ENCODE measurements at regions of chr14 and their contacts with region 1.

Region 1: DNA sequence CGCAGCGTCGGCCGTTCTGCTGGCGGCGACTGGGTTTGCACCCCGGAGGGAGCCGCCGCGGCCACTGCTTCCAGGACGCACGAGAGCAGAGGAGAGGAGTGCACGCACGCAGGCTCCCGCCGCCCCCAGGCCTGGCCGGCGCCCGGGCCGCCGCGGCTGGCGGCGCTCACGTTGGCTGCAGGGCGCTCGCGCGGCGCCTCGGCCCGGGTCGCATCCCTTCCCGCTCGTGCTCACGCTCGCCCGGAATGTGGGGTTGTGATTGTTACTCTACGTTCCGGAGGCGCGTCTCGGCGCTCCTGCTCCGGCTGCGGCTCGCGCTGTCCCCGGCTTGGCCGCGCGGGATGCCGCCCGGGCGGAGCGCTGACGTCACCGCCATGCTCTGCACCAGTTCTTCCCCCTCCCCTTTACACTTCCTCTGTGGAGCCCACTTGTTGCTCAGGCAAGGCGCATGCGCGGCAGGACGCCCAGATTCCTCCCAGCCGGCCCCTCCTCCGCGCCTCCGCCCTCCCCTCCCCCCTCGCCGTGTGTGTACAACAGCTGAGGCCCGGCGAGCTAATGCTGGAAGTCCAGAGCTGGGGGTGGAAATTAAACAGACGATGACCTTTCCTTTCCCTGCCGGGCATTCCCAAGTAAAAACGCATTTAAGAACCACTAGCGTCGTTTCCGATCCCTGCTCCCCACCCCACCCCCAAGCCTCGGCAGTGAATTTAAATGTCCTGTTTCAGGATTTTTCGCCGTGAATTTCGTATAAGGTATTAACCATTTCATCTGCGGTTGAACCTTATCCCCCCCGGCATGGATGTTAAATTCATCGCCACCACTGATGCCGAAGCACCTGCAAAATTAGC is at the start of gene IRF2BPL:
- DNase-seq: peak; percentile 97
- ATAC-seq: peak; percentile 70
- H3K4me3 ChIP-seq: peak within 1 kb of the TSS; percentile 11 to 95 (median 82)
- H3K4me3 Mint-ChIP-seq: peak within 1 kb of the TSS; percentile 92
- H3K27ac ChIP-seq: peak within 1 kb of the TSS; percentile 96 to 98
- H3K27ac Mint-ChIP-seq: peak within 1 kb of the TSS; percentile 99
- H3K4me1 ChIP-seq: peaks cover 39 to 47% of the 10 kb centered on the region in 2 donors
- H3K4me1 Mint-ChIP-seq: peaks cover 46% of the 10 kb centered on the region
- H3K27me3 ChIP-seq: no peaks in the 10 kb centered on the region
- H3K27me3 Mint-ChIP-seq: no peaks in the 10 kb centered on the region
- CTCF ChIP-seq: no peak
- total RNA-seq, gene IRF2BPL: 32.8 and 34.0 TPM in 2 replicates

Region 2: DNA sequence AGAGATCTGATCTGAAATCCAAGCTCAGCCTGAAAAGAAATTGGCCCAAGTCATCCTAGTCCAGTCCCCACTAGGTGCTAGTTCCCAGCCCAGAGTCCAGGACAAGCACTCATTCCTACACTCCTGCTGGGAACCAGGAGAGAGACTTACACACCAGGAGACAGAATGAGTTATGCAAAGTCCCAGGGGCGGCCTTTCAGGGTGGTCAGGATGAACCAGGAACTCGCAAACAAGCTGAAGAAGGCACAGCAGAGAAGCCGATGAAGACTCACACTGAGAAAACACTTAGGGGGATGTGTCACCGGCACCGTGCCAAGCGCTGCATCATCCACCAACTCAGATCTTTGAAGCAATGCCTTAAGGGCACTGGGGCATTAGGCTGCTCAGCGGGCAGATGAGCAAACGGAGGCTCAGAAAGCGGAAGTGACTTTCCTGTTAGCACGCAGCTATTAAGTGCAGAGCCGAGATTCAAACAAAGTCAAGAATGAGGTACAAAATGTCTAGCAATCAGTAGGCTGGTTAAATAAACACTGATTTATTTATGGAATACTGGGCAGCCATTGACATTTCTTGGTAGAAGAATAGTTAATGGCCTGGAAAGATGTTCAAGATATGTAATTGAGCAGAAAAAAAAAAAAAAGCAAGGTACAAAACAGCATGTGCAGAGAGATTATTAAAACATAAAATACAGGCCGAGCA is 123.7 kb before region 1 on chr14:
- CTCF ChIA-PET with region 1: interaction called, 3 read pairs
- POLR2A ChIA-PET with region 1: interaction called, 9 read pairs
- intact Hi-C with region 1: loop called (anchors 1 kb)
- DNase-seq: peak; percentile 91
- ATAC-seq: peak; percentile 83
- H3K4me3 ChIP-seq: peak overlapping the region in 1 of 5 experiments; percentile 36
- H3K4me3 Mint-ChIP-seq: peak overlapping the region; percentile 55
- H3K27ac ChIP-seq: peak overlapping the region; percentile 57 to 76
- H3K27ac Mint-ChIP-seq: peak overlapping the region; percentile 89
- H3K4me1 ChIP-seq: peaks cover 29 to 45% of the 10 kb centered on the region in 2 donors
- H3K4me1 Mint-ChIP-seq: peaks cover 34% of the 10 kb centered on the region
- H3K27me3 ChIP-seq: peaks cover 0 to 6% (median 0%) of the 10 kb centered on the region in 4 experiments
- H3K27me3 Mint-ChIP-seq: no peaks in the 10 kb centered on the region
- CTCF ChIP-seq: no peak

Region 3: GRCh38 chr14:76947078-76947837 is 81.3 kb before region 1 on chr14:
- CTCF ChIA-PET with region 1: interaction called, 28 read pairs
- POLR2A ChIA-PET with region 1: interaction called, 5 read pairs
- intact Hi-C with region 1: loop called (anchors 1 kb)
- DNase-seq: peak; percentile 90
- ATAC-seq: peak; percentile 95
- H3K4me3 ChIP-seq: peak overlapping the region in 1 of 5 experiments; percentile 24
- H3K4me3 Mint-ChIP-seq: peak overlapping the region; percentile 64
- H3K27ac ChIP-seq: no peak overlapping the region
- H3K27ac Mint-ChIP-seq: peak overlapping the region; percentile 56
- H3K4me1 ChIP-seq: peaks cover 11 to 15% of the 10 kb centered on the region in 2 donors
- H3K4me1 Mint-ChIP-seq: peaks cover 17% of the 10 kb centered on the region
- H3K27me3 ChIP-seq: no peaks in the 10 kb centered on the region
- H3K27me3 Mint-ChIP-seq: no peaks in the 10 kb centered on the region
- CTCF ChIP-seq: peak; percentile 67

Region 4: DNA sequence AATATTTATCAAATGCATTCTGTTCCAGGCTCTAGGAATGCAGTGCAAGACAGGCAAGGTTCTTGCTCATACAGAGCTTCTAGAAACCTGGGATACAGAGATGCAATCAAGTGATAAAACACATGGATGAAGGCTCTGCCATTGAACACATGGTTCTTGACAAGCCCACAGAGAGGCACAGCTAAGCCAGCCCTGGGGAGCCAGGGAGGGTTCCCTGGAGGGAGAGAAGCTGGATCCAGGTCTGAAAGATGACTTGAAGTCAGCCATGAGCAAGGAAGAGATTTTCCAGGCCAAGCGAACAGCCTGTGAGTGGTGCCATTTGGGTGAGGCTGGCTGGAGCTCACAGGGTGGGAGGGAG is 66.3 kb before region 1 on chr14:
- CTCF ChIA-PET with region 1: interaction called, 33 read pairs
- POLR2A ChIA-PET with region 1: interaction called, 54 read pairs
- intact Hi-C with region 1: loop called (anchors 1 kb)
- DNase-seq: no peak
- ATAC-seq: no peak
- H3K4me3 ChIP-seq: peak overlapping the region; percentile 22 to 57 (median 32)
- H3K4me3 Mint-ChIP-seq: peak overlapping the region; percentile 87
- H3K27ac ChIP-seq: peak overlapping the region; percentile 83 to 85
- H3K27ac Mint-ChIP-seq: peak overlapping the region; percentile 95
- H3K4me1 ChIP-seq: peaks cover 44 to 71% of the 10 kb centered on the region in 2 donors
- H3K4me1 Mint-ChIP-seq: peaks cover 72% of the 10 kb centered on the region
- H3K27me3 ChIP-seq: no peaks in the 10 kb centered on the region
- H3K27me3 Mint-ChIP-seq: no peaks in the 10 kb centered on the region
- CTCF ChIP-seq: no peak

Region 5: GRCh38 chr14:77040059-77040740 is 11.6 kb after region 1 on chr14:
- CTCF ChIA-PET with region 1: interaction called, 48 read pairs
- POLR2A ChIA-PET with region 1: interaction called, 46 read pairs
- intact Hi-C with region 1: loop called (anchors 1 kb)
- DNase-seq: peak; percentile 94
- ATAC-seq: peak; percentile 72
- H3K4me3 ChIP-seq: peak overlapping the region; percentile 11 to 70 (median 56)
- H3K4me3 Mint-ChIP-seq: peak overlapping the region; percentile 88
- H3K27ac ChIP-seq: peak overlapping the region; percentile 89 to 93
- H3K27ac Mint-ChIP-seq: peak overlapping the region; percentile 98
- H3K4me1 ChIP-seq: peaks cover 71 to 86% of the 10 kb centered on the region in 2 donors
- H3K4me1 Mint-ChIP-seq: peaks cover 79% of the 10 kb centered on the region
- H3K27me3 ChIP-seq: no peaks in the 10 kb centered on the region
- H3K27me3 Mint-ChIP-seq: no peaks in the 10 kb centered on the region
- CTCF ChIP-seq: no peak

Region 6: DNA sequence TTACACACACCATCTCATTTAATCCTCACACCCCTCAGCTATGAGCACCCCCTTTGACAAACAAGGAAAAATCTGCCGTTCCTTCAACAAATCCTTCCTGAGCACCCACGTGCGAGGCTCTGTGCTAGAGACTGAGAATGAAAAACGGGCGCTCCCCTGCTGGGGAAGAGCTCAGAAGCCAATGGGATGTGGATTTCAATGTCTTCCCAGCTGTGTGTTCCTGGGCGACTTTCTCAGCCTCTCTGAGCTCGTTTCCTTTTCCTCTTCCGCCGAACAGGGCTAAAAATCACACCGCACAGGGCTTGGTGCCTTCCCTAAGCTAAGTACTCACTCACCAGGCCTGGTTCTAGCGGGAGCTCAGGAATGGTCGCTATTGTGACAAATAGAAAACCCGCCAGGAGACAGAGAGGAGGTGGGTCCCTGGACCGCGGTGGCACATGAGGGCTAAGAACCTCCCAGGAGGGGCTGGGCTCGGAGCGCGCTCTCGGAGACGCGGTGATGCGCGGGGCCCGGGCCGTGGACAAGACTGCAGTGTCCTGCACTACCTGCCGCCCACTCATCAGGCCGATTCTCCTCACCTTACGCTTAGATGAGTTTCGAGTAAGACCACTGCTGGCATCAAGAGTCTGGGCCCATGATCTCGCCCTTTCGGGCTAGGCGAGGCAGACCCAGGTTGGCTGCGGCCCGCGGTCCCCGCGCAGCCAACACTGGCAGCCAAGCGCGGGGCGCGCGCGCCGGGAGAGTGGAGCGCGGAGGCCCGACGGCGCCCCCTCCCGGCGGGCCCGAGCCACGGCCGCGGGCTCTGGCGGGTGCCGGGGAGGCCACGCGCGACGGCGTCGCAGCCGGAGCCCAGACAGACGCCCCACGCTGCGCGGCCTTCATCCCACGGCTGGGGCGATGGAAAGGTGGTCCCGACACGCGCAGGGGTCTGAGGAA is 96.0 kb after region 1 on chr14:
- CTCF ChIA-PET with region 1: interaction called, 4 read pairs
- POLR2A ChIA-PET with region 1: interaction called, 9 read pairs
- intact Hi-C with region 1: loop called (anchors 2 kb)
- DNase-seq: peak; percentile 89
- ATAC-seq: peak; percentile 42
- H3K4me3 ChIP-seq: peak overlapping the region; percentile 32 to 79 (median 73)
- H3K4me3 Mint-ChIP-seq: peak overlapping the region; percentile 93
- H3K27ac ChIP-seq: peak overlapping the region; percentile 39 to 93
- H3K27ac Mint-ChIP-seq: peak overlapping the region; percentile 94
- H3K4me1 ChIP-seq: peaks cover 54 to 60% of the 10 kb centered on the region in 2 donors
- H3K4me1 Mint-ChIP-seq: peaks cover 59% of the 10 kb centered on the region
- H3K27me3 ChIP-seq: peaks cover 0 to 28% (median 4%) of the 10 kb centered on the region in 4 experiments
- H3K27me3 Mint-ChIP-seq: peaks cover 12% of the 10 kb centered on the region
- CTCF ChIP-seq: peak; percentile 78

Region 7: GRCh38 chr14:77141214-77142004 is 112.8 kb after region 1 on chr14 and contains the start of gene ZDHHC22:
- CTCF ChIA-PET with region 1: no interaction called
- POLR2A ChIA-PET with region 1: no interaction called
- intact Hi-C with region 1: no loop called
- DNase-seq: peak; percentile 55
- ATAC-seq: peak; percentile 53
- H3K4me3 ChIP-seq: peak within 1 kb of the TSS in 3 of 5 experiments; percentile 21 to 41 (median 33)
- H3K4me3 Mint-ChIP-seq: peak within 1 kb of the TSS; percentile 85
- H3K27ac ChIP-seq: no peak within 1 kb of the TSS
- H3K27ac Mint-ChIP-seq: no peak within 1 kb of the TSS
- H3K4me1 ChIP-seq: peaks cover 34 to 40% of the 10 kb centered on the region in 2 donors
- H3K4me1 Mint-ChIP-seq: peaks cover 26% of the 10 kb centered on the region
- H3K27me3 ChIP-seq: peaks cover 0 to 76% (median 52%) of the 10 kb centered on the region in 4 experiments
- H3K27me3 Mint-ChIP-seq: peaks cover 81% of the 10 kb centered on the region
- CTCF ChIP-seq: peak; percentile 56
- total RNA-seq, gene ZDHHC22: 0.12 TPM in 1 of 2 replicates, not detected in the other

Measured in B cell (primary cell).